Activated CD8-positive, alpha-beta memory T cell treated with anti-CD3 and anti-CD28 coated beads, Interleukin-2, amount 10 ng/mL, durations not matched to agents 7 days and 5 days (primary cell): ENCODE measurements at regions of chr15 and their contacts with region 1.

Region 1: GRCh38 chr15:66851226-66852071 is 149.4 kb downstream of the SMAD6 start:
- DNase-seq: peak; percentile 82
- ATAC-seq: peak; percentile 99
- H3K4me3 Mint-ChIP-seq: no peak overlapping the region
- H3K27ac Mint-ChIP-seq: no peak overlapping the region
- H3K4me1 Mint-ChIP-seq: peaks cover 4% of the 10 kb centered on the region
- H3K27me3 Mint-ChIP-seq: peaks cover 23% of the 10 kb centered on the region

Region 2: DNA sequence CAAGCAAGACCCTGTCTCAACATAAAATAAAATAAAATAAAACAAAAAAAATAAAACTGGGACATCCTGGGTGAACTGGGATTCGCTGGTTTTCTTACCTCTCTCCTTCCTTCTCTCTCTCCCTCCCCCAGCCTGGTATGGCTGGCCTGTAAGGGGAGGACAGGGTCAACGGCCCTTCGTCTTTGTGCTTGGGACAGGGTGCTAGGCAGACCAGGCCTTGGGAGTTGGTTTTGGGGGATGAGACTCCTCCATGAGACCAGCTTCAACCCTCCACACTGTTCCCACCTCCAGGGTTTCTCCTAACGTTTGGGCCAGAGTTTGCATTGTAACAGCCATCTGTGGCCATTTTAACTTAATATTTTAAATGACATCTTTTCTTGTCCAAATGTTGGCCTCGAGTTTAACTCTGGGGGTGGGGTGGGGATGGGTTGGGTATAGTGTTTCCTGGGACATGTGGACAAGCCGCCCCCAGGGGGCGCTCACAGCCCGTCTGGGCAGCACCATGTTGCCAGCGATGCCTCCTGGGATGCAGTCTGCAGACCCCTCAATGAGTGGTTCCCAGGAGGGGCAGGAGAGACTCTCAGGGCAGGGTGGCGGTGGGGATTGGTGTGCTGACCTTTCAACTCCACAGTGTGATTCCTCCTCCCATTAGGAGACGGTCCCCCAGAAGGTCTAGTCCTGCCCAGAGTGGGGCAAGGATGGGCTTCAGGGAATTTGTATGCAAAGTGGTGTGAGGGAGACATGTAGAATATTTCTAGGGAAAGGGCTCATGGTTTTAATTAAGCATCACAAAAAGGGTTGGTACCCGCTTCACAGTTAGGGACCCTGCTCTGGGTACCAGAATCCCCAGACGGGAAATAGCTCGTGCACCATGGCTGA is 247.9 kb before region 1 on chr15:
- CTCF ChIA-PET with region 1: interaction called, 77 read pairs
- DNase-seq: peak; percentile 70
- ATAC-seq: peak; percentile 79
- H3K4me3 Mint-ChIP-seq: no peak overlapping the region
- H3K27ac Mint-ChIP-seq: no peak overlapping the region
- H3K4me1 Mint-ChIP-seq: peaks cover under 1% of the 10 kb centered on the region
- H3K27me3 Mint-ChIP-seq: peaks cover 2% of the 10 kb centered on the region

Region 3: DNA sequence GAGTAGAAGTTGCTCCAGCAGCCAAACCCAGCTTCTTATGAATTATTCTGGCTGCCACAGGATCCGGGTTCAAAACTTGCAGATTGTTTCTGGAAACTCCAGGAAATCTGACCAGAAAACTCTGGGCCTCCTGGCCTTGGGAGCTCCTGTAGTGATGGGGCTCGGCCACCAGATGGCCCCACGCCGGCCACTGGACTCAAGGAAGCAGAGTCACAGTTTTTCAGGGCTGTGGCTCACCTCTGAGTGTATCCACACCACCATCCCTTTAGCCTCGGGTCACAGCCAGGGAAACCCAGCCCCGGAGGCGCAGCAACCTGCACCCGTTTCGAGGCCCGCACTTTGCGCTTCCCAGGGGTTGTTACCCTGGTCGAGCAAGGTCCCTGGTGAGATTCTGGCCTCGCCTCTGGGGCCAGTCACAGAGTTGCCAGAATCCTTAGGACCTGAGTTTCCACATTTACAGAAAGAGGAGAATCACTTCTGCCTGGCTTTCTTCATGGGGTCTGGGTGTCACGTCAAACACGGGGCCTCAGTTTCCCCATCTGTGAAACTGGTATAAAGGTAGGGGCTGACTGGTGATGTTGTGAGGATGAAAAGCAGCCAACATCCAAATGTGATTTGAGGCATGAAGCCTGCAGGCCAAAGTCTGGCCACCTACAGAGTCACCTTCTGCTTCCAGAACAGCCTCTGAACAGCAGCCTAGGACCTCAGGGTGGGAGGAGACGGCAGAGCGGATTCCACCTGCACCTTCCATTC is 232.1 kb before region 1 on chr15:
- CTCF ChIA-PET with region 1: interaction called, 33 read pairs
- DNase-seq: peak; percentile 59
- ATAC-seq: no peak
- H3K4me3 Mint-ChIP-seq: no peak overlapping the region
- H3K27ac Mint-ChIP-seq: no peak overlapping the region
- H3K4me1 Mint-ChIP-seq: peaks cover 9% of the 10 kb centered on the region
- H3K27me3 Mint-ChIP-seq: peaks cover 30% of the 10 kb centered on the region

Region 4: DNA sequence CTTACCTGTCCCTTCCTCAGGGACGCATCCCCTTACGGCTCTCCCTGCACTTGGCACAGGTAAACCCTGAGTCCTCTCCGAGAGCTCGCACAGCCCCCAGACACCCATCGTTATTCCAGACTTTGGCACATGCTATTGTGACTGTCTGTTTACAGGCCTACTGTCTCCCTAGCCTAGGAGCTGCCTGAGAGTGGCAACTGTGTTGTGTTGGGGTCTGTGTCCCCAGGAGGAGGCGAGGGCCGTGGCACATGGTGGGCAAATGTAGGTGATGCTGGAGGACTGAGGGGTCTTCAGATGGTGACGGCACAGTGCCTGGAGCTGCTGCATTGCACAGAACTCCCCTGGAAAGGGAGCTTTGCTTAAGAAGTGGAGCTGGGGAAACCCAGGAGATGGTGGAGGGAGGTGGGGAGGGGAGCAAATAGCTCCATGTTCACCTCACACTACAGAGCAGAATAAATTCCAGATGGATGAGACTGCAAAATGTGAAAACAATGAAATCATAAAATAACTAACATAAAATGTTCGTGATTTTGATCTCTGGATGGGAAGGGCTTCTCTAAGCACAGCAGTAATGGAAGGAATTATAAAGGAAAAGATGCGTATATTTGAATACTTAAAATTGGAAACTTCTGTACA is 52.9 kb before region 1 on chr15:
- CTCF ChIA-PET with region 1: no interaction called
- DNase-seq: no peak
- ATAC-seq: no peak
- H3K4me3 Mint-ChIP-seq: no peak overlapping the region
- H3K27ac Mint-ChIP-seq: no peak overlapping the region
- H3K4me1 Mint-ChIP-seq: peaks cover 2% of the 10 kb centered on the region
- H3K27me3 Mint-ChIP-seq: peaks cover 2% of the 10 kb centered on the region

Region 5: DNA sequence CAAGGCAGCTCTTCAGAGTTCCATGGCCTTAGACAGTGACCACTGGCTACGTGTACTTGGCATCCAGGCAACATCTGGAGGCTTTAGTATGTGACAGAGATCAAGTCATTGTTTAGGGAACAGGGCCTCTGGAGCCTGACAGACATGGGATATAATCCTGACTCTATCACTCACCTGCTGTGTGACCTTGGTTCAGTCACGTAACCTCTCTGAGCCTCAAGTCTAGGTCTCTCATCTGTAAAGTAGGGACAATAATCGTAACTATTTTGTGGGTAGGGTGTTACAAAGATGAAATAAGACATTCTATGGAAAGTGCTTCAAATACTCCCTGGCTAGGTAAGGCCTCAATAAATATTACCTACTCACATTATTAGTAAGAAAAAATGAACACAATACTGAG is 35.2 kb before region 1 on chr15:
- CTCF ChIA-PET with region 1: no interaction called
- DNase-seq: no peak
- ATAC-seq: no peak
- H3K4me3 Mint-ChIP-seq: no peak overlapping the region
- H3K27ac Mint-ChIP-seq: no peak overlapping the region
- H3K4me1 Mint-ChIP-seq: no peaks in the 10 kb centered on the region
- H3K27me3 Mint-ChIP-seq: peaks cover 25% of the 10 kb centered on the region

Region 6: DNA sequence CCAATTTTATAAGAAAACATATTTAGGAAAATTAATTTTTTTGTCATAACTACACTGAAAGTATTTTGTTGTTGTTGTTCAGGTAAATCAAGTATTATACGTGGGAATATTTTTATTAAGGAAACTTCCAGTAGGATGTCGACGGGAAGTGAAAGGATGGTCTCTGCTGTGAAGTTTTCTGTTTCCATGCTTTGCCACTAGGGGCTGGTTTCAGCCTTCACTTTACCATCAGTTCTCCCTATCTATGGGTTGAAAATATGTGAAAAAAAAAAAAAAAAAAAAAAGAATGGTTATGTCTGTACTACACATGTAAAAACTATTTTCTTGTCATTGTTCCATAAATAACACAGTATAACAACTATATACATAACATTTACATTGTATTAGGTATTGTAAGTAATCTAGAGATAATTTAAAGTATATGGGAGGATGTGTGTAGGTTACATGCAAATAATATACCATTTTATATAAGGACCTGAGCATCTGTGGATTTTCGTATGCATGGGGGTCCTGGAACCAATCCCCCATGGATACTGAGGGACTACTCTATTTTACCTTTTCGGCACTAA is 12.7 kb before region 1 on chr15:
- CTCF ChIA-PET with region 1: interaction called, 16 read pairs
- DNase-seq: no peak
- ATAC-seq: no peak
- H3K4me3 Mint-ChIP-seq: no peak overlapping the region
- H3K27ac Mint-ChIP-seq: no peak overlapping the region
- H3K4me1 Mint-ChIP-seq: no peaks in the 10 kb centered on the region
- H3K27me3 Mint-ChIP-seq: peaks cover 27% of the 10 kb centered on the region

Region 7: DNA sequence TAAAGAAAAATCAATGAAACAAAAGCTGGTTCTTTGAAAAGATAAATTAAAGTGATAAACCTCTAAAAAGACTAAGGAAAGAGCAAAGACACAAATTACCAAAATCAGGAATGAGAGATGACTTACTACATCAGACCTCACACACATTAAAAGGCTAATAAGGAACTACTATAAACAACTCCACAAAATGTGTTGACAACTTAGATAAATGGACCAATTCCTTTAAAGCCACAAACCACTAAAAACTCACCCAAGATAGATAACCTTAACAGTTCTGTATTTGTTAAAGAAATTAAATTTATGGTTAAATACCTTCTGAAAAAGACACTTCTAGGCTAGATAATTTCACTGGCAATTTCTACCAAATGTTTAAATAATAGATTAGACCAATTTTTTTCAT is 21.0 kb after region 1 on chr15:
- CTCF ChIA-PET with region 1: interaction called, 11 read pairs
- DNase-seq: no peak
- ATAC-seq: no peak
- H3K4me3 Mint-ChIP-seq: no peak overlapping the region
- H3K27ac Mint-ChIP-seq: no peak overlapping the region
- H3K4me1 Mint-ChIP-seq: peaks cover 5% of the 10 kb centered on the region
- H3K27me3 Mint-ChIP-seq: peaks cover 55% of the 10 kb centered on the region

Region 8: DNA sequence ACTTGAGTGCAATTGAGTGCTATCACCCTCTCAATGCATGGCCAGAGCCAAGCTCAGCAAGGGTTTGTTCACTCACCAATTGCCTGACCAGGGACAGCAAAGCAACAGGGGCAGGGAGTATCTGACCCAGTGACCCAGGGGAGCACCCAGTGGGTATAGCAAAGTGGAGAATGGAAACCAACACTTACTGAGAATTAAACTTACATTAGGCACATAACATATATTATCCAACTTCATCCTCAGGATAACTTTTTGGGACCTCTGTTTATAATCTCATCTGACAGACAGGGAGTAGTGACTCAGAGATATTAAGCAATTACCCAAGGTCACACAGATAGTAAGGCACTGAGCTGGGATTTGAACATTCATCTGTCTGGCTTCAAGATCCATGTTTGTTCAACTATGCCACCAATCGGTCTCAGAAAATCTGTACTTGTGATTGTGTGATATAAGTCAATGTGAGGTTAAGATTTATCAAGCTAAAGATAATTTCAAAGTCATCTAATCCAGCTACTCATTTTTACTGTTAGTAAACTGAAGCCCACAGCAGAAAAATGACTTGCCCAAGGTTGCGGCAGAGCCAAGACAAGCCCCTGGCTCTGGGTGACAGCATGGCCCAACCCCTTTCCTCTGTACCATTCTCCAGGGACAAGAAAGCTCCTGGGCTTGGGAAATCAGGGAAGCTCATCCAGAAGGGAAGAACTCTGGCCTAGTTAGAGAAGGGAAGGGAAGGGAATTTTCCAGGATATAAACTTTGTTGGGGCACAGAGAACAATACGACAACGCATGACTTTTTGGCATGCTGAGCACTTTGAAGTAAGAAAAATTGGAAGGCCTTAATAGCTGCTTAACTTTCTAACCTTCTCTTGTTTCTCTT is 76.0 kb after region 1 on chr15:
- CTCF ChIA-PET with region 1: no interaction called
- DNase-seq: no peak
- ATAC-seq: no peak
- H3K4me3 Mint-ChIP-seq: no peak overlapping the region
- H3K27ac Mint-ChIP-seq: no peak overlapping the region
- H3K4me1 Mint-ChIP-seq: peaks cover 13% of the 10 kb centered on the region
- H3K27me3 Mint-ChIP-seq: peaks cover 33% of the 10 kb centered on the region